Activated naive CD4-positive, alpha-beta T cell treated with anti-CD3 and anti-CD28 coated beads, Interleukin-2, amount 10 ng/mL, durations not matched to agents 7 days and 5 days (primary cell): ENCODE measurements at regions of chr1 and their contacts with region 1.

Region 1: GRCh38 chr1:202571347-202572339 is 138.6 kb downstream of the SYT2 start:
- DNase-seq: peak; percentile 46
- H3K4me3 Mint-ChIP-seq: no peak overlapping the region
- H3K27ac Mint-ChIP-seq: no peak overlapping the region
- H3K4me1 Mint-ChIP-seq: no peaks in the 10 kb centered on the region
- H3K27me3 Mint-ChIP-seq: no peaks in the 10 kb centered on the region

Region 2: GRCh38 chr1:202348509-202349205 is 223.0 kb before region 1 on chr1 and contains the start of gene PPP1R12B:
- CTCF ChIA-PET with region 1: interaction called, 12 read pairs
- DNase-seq: peak; percentile 98
- H3K4me3 Mint-ChIP-seq: peak within 1 kb of the TSS; percentile 83
- H3K27ac Mint-ChIP-seq: peak within 1 kb of the TSS; percentile 90
- H3K4me1 Mint-ChIP-seq: peaks cover 25% of the 10 kb centered on the region
- H3K27me3 Mint-ChIP-seq: peaks cover 6% of the 10 kb centered on the region

Region 3: DNA sequence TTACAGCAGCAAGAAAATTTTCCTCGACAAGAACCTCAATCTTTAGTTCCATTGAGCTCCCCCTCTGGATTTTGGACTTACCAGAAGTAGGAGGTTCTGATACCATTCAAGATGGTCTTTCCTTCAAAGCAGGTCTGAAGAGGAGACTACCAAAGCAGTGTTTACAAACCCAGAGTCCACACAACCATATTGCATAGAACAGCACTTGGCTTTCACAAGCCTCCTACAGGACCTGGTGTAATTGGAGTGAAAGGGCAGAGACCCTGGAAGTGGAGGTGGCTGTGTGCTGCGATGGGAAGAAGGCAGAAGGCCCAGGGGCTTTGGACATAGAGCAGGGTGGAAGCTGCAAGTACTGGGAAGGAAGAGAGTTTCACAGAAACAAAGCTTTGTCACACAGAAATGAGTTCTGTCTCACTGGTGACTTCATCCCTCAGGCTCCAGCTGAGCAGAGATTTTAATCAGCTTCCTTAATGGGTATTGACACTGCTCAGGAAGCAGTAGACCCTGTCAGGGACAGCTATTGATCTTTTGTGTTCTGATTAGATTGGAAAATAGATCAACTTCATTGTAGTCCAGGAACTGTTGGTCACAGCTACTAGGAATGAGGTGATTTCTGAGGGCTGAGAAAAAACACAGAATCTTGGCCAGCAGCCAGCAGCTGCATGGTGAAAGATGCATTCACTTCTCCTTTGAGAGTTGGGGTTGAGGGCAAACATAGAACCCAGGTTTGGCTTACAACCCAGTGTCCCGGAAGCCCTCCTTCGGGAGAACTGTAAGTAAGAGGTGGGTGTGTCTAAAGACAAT is 14.6 kb after region 1 on chr1:
- CTCF ChIA-PET with region 1: interaction called, 18 read pairs
- DNase-seq: no peak
- H3K4me3 Mint-ChIP-seq: no peak overlapping the region
- H3K27ac Mint-ChIP-seq: peak overlapping the region; percentile 40
- H3K4me1 Mint-ChIP-seq: peaks cover 2% of the 10 kb centered on the region
- H3K27me3 Mint-ChIP-seq: no peaks in the 10 kb centered on the region

Region 4: GRCh38 chr1:202692959-202693555 is 121.4 kb after region 1 on chr1:
- CTCF ChIA-PET with region 1: no interaction called
- DNase-seq: peak; percentile 87
- H3K4me3 Mint-ChIP-seq: no peak overlapping the region
- H3K27ac Mint-ChIP-seq: no peak overlapping the region
- H3K4me1 Mint-ChIP-seq: peaks cover 4% of the 10 kb centered on the region
- H3K27me3 Mint-ChIP-seq: peaks cover 68% of the 10 kb centered on the region